GM12878 (cell line): ENCODE measurements at regions of chr7 and their contacts with region 1.

Region 1: GRCh38 chr7:100538654-100539435 is at the start of gene AGFG2:
- DNase-seq: peak; percentile 98
- ATAC-seq: peak; percentile 96
- H3K4me3 ChIP-seq: peak within 1 kb of the TSS; percentile 85
- H3K27ac ChIP-seq: peak within 1 kb of the TSS; percentile 67
- H3K4me1 ChIP-seq: peaks cover 21% of the 10 kb centered on the region
- H3K27me3 ChIP-seq: no peaks in the 10 kb centered on the region
- CTCF ChIP-seq: no peak
- EP300 ChIP-seq: no peak
- POLR2A ChIP-seq: peak; percentile 90
- RAD21 ChIP-seq: 0 out of 2 replicates have a peak, but pooled peaks have one; percentile 8
- polyA plus RNA-seq, gene AGFG2: 0.90 to 1.1 TPM

Region 2: DNA sequence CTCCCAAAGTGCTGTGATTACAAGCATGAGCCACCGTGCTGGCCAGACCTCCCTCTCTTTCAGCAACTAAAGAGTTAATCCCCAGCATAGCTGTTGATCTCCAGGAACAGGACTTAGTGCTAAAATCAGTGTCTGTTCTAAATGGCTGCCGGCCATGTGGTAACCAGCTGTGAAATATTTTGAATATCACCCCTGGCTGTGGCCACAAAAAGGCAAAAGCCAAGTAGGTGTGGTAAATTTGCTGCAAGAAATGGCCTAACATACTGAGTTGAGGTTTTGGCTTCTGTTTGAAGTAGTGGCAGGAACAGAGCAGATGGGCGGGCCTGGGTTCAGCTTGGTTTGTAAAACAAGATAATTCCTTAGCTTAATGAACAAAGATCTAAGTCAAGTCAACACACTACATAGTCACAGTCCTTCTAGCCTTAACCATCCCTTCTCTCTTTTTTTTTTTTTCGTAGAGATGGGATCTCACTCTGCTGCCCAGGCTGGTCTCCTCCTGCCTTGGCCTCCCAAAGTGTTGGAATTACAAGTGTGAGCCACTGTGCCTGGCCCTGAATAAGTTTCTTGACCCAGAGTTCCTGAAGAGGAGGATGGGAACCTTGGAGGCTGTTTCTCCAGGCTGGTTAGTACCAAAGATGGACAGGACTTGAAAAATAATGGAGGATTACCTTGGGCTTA is 22.6 kb before region 1 on chr7:
- CTCF ChIA-PET with region 1: interaction called, 4 read pairs
- POLR2A ChIA-PET with region 1: interaction called, 5 read pairs
- RAD21 ChIA-PET with region 1: interaction called, 6 read pairs
- SMC1A ChIA-PET with region 1: interaction called, 10 read pairs
- in situ Hi-C with region 1: no loop called
- intact Hi-C with region 1: no loop called
- DNase-seq: peak; percentile 66
- ATAC-seq: peak; percentile 98
- H3K4me3 ChIP-seq: no peak overlapping the region
- H3K27ac ChIP-seq: peak overlapping the region; percentile 38
- H3K4me1 ChIP-seq: peaks cover 25% of the 10 kb centered on the region
- H3K27me3 ChIP-seq: no peaks in the 10 kb centered on the region
- CTCF ChIP-seq: no peak
- EP300 ChIP-seq: peak in 1 of 2 experiments; percentile 55; a peak in 1 of 4 replicates
- POLR2A ChIP-seq: no peak
- RAD21 ChIP-seq: no peak